Activated naive CD4-positive, alpha-beta T cell treated with anti-CD3 and anti-CD28 coated beads, Interleukin-2, amount 10 ng/mL, durations not matched to agents 7 days and 5 days (primary cell): ENCODE measurements at regions of chr20 and their contacts with region 1.

Region 1: DNA sequence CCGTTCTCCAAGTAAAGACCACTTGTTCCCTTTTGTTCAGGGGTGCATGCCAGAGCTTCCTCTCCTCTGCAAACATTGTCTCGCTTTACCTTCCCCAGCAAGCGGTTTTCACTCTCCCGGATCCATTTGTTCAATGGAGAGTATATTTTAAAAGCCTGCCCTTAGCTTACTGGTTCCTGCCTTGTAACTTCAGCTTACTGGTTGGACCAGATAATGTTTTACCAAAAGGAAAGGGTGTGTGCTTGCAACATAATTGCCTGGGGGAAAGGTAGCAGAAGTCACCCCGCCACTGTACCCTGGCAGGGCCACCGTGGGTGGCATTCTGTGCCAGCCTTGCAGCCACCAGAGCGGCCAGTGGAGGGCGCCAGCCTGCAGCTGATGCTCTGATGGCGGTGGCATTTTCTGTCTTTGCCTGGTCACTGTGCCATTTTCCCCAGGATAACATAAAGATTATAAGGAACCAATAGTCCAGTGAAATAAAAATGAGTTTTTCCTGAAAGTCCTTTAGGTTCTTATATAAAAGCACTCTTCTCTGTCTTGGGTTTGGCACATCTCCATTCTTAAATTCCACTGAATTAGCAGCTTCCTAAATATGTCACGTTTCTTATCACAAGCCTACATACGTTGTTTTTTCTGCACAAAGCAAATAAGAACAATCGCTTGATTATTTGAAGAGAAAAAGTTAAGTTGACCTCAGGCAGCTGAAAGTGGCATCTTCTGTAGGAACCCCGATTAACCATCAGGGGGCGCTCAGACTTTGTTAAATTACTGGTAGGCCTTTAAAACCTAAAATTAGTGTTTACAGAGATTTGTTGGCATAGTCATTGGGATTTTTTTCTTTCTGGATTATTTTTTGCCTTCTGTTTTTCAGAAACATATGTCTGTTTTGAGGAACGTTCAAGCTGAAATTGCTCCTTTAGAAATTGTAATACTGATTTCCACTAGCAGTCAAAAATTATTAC is 67.4 kb upstream of the XRN2 start:
- DNase-seq: peak; percentile 78
- H3K4me3 Mint-ChIP-seq: no peak overlapping the region
- H3K27ac Mint-ChIP-seq: no peak overlapping the region
- H3K4me1 Mint-ChIP-seq: peaks cover 2% of the 10 kb centered on the region
- H3K27me3 Mint-ChIP-seq: no peaks in the 10 kb centered on the region

Region 2: DNA sequence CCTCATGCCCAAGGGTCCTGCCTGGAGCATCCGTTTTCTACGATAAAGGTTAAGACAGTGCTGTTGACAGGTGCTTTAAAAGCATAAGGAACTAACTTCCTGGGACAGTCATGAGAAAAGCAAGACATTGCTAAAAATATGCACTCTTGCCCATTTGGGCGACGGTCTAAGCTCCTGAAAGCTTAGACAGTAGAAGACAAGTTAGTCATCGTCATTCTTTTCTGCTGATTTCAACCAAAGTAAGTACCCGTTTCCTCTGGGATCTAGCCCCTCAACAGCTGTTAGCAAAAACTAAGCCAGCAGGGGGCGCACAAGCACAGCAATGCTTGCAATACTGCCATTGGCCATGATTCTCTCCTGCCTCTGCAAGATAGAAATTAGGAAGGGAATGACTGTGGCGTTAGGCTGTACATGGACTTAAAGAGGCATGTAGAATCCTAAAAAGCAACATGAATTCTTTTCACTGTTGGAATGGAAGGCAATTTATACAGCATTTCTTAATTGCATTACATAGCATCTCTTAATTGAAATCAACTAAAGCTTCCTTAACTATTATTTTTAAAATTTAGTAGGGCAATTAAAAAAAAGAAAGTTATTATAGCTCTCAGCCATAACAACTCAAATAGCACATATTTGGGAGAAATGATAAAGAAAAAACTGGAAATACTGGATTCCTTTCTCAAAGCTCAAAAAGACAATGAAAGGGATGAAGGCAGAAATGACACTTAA is 375.5 kb before region 1 on chr20:
- CTCF ChIA-PET with region 1: interaction called, 15 read pairs
- DNase-seq: peak; percentile 91
- H3K4me3 Mint-ChIP-seq: no peak overlapping the region
- H3K27ac Mint-ChIP-seq: no peak overlapping the region
- H3K4me1 Mint-ChIP-seq: no peaks in the 10 kb centered on the region
- H3K27me3 Mint-ChIP-seq: peaks cover 23% of the 10 kb centered on the region

Region 3: DNA sequence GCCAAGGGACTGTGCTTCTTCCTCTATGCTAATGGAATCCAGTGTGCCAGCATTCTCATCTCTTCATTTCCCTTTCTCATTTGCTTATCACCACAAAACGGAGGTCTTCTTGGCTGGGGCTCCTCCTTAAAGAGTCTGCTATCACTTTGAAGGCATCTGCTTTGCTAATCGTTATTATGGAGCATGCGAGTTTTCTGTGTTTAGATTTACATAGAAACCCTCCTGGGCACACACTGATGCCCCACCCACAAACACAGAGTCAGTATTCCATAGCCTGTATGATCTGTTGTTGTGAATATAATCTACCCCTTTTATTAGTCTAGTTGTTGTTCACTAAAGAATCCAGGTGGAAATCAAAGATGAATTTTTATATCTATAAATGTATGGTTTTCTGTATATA is 16.1 kb before region 1 on chr20:
- CTCF ChIA-PET with region 1: interaction called, 10 read pairs
- DNase-seq: no peak
- H3K4me3 Mint-ChIP-seq: no peak overlapping the region
- H3K27ac Mint-ChIP-seq: no peak overlapping the region
- H3K4me1 Mint-ChIP-seq: no peaks in the 10 kb centered on the region
- H3K27me3 Mint-ChIP-seq: no peaks in the 10 kb centered on the region

Region 4: DNA sequence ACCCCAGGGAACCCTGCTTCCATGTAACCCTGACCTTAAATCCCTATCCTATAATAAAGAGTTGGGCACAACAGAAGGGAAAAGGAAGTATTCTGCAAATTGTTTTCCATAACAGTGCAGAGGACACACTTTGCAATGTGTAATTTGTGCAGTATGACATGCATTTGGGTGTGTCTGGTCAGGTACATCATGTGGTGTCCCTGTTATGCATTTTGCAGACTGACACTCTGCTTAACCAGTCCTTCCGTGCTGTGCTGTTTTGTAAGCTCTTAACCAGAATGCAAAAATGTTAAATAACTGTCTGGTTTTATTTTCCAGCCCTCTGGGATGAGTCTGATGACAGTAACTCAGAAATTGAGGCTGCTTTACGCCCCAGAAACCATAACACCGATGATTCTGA is 10.4 kb after region 1 on chr20:
- CTCF ChIA-PET with region 1: interaction called, 14 read pairs
- DNase-seq: no peak
- H3K4me3 Mint-ChIP-seq: no peak overlapping the region
- H3K27ac Mint-ChIP-seq: no peak overlapping the region
- H3K4me1 Mint-ChIP-seq: no peaks in the 10 kb centered on the region
- H3K27me3 Mint-ChIP-seq: peaks cover 2% of the 10 kb centered on the region

Region 5: DNA sequence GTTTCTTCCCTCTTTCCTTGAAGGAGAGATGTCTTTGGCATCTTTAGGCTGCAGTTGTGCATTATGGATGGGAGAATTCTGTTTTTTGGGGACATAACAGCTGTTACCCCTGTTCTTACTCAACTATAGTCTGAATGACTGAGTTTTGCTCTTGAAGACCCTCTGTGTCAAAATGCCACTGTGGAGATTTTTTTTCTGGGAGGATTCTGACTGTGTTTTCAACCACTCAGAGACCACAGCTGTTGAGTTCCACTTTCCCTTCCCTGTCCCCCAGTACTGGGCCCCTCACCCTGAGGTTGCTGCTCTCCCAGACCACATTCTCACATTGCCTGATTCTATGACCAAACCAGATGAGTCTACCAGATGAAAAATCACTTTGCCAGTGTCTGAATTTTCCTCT is 230.0 kb after region 1 on chr20:
- CTCF ChIA-PET with region 1: no interaction called
- DNase-seq: no peak
- H3K4me3 Mint-ChIP-seq: no peak overlapping the region
- H3K27ac Mint-ChIP-seq: no peak overlapping the region
- H3K4me1 Mint-ChIP-seq: no peaks in the 10 kb centered on the region
- H3K27me3 Mint-ChIP-seq: peaks cover 26% of the 10 kb centered on the region

Region 6: GRCh38 chr20:21505161-21505809 is 269.5 kb after region 1 on chr20:
- CTCF ChIA-PET with region 1: interaction called, 212 read pairs
- DNase-seq: peak; percentile 80
- H3K4me3 Mint-ChIP-seq: peak overlapping the region; percentile 47
- H3K27ac Mint-ChIP-seq: peak overlapping the region; percentile 49
- H3K4me1 Mint-ChIP-seq: peaks cover 29% of the 10 kb centered on the region
- H3K27me3 Mint-ChIP-seq: peaks cover 82% of the 10 kb centered on the region